ENCODE measurements at regions of chr1 and their contacts with region 1.

Region 1: DNA sequence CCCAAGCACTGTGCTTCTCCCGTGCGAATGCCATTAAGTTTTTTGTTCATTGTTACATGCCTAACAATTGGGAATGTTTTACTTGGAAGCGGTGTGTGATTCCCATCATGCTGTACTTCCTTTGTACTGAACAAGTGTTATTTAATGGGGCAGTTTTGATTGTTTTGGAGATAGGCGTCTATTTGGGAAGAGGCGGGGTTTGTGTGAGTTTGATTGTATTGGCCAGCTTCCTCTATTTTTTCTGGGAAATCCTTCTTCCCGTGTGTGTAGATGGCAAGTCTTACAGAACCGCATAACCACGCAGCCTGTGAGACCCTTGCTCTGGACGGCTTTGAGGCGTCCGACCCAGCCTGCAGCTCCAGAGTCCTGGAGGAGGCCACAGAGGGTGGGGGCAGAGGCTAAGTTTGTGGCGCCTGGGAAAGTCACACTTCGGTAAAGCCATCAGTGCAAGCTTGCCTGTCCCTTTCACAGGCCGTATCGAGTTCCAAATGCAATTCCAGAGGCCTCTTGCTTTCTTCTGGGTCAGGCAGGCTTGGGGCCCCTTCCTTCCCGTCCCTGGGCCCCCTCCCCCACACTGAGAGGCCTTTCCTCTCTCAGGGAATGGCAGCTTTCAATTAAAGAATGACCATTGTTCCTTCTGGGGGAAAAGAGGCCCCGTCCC is 210.3 kb downstream of the TOMM20 start:
- DNase-seq: peak; percentile 73
- H3K4me3 ChIP-seq: no peak overlapping the region
- H3K27ac ChIP-seq: peak overlapping the region; percentile 54 to 68
- H3K4me1 ChIP-seq: peaks cover 21% of the 10 kb centered on the region
- H3K27me3 ChIP-seq: no peaks in the 10 kb centered on the region
- CTCF ChIP-seq: no peak
- POLR2A ChIP-seq: no peak

Region 2: GRCh38 chr1:234533975-234534876 is 384.1 kb before region 1 on chr1:
- intact Hi-C with region 1: loop called (anchors 5 kb)
- DNase-seq: peak; percentile 94
- H3K4me3 ChIP-seq: no peak overlapping the region
- H3K27ac ChIP-seq: peak overlapping the region; percentile 99 to 100
- H3K4me1 ChIP-seq: peaks cover 54% of the 10 kb centered on the region
- H3K27me3 ChIP-seq: no peaks in the 10 kb centered on the region
- CTCF ChIP-seq: no peak
- POLR2A ChIP-seq: no peak

Region 3: DNA sequence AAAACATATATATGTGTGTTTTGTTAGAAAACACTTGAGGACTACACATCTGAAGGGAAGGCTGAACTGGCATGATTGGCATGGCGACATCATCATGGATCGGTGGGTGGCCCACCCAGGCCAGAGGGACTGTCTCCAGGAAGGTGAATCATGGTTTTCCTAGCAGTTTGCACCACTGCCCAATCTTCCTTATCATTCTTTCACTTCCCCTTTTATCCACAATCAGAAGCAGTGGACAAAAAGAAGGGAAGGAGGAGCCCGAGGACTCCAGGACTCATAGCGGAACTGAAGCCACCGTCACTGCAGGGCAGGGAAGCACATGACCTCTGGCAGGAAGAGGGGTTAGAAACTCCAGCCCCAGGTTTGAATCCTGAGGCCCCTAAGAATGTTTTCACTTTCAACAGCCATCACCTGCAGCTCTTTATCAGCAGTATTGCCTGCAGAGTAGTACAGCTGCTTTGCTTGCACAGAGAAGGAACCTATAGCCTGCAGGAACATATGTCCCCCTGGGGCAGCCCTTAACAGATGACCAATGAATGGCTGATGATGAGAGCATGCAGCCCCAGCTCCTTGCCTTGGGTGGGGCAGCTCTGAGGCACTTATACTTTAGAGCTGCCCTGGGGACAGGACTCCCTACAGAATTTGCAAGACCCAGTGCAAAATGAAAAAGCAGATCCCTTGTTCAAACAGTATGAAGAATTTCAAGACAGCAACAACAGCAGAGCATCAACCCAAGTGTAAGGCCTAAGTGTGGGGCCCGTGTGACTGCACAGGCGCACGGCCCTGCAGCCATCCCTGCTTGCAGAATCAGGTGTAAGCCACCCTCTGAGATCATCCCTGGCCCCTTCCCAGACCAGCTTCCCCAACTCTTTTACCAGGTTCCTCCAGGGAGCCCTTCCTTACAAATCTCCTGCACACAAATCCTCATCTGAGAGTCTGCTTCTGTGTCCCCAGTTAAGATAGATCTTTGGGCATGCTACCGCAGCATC is 66.6 kb before region 1 on chr1:
- intact Hi-C with region 1: no loop called
- DNase-seq: no peak
- H3K4me3 ChIP-seq: no peak overlapping the region
- H3K27ac ChIP-seq: no peak overlapping the region
- H3K4me1 ChIP-seq: no peaks in the 10 kb centered on the region
- H3K27me3 ChIP-seq: no peaks in the 10 kb centered on the region
- CTCF ChIP-seq: no peak
- POLR2A ChIP-seq: no peak

Region 4: DNA sequence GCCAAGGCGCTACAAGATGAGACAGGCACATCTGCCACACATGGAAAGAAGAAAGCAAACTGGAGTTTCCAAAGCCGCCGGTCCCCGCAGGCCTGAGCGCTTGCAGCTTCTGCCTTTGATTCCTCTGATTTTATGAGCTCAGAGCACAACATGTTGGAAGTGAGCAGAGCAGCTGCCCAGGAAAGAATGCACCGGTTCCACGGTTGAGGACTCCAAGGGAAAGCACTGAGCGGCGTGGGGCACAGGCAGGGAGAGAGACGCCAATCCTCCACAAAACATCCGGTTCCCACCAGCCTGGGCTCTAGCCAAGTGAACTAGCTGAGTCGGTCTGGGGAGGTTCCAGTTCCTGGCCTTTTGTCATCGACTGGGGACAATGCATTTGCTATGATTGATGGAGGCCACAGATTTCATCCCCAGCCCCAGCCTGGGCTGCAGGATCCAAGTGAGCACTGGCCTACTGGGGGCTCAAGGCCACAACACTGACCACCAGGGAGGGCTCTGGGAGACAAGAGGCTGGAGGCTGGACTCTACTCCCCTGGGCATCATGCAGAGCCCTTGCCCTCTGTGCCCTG is 55.3 kb before region 1 on chr1:
- intact Hi-C with region 1: loop called (anchors 1 kb)
- DNase-seq: peak; percentile 86
- H3K4me3 ChIP-seq: no peak overlapping the region
- H3K27ac ChIP-seq: peak overlapping the region; percentile 64 to 73
- H3K4me1 ChIP-seq: peaks cover 9% of the 10 kb centered on the region
- H3K27me3 ChIP-seq: no peaks in the 10 kb centered on the region
- CTCF ChIP-seq: no peak
- POLR2A ChIP-seq: no peak

Region 5: GRCh38 chr1:234887016-234887900 is 31.1 kb before region 1 on chr1:
- intact Hi-C with region 1: loop called (anchors 2 kb)
- DNase-seq: no peak
- H3K4me3 ChIP-seq: no peak overlapping the region
- H3K27ac ChIP-seq: peak overlapping the region; percentile 72
- H3K4me1 ChIP-seq: no peaks in the 10 kb centered on the region
- H3K27me3 ChIP-seq: no peaks in the 10 kb centered on the region
- CTCF ChIP-seq: no peak
- POLR2A ChIP-seq: no peak

Region 6: GRCh38 chr1:234933475-234933874 is 15.2 kb after region 1 on chr1:
- intact Hi-C with region 1: no loop called
- DNase-seq: no peak
- H3K4me3 ChIP-seq: no peak overlapping the region
- H3K27ac ChIP-seq: no peak overlapping the region
- H3K4me1 ChIP-seq: no peaks in the 10 kb centered on the region
- H3K27me3 ChIP-seq: no peaks in the 10 kb centered on the region
- CTCF ChIP-seq: no peak
- POLR2A ChIP-seq: no peak

Region 7: GRCh38 chr1:234997201-234997895 is 79.0 kb after region 1 on chr1:
- intact Hi-C with region 1: loop called (anchors 2 kb)
- DNase-seq: peak; percentile 98
- H3K4me3 ChIP-seq: no peak overlapping the region
- H3K27ac ChIP-seq: peak overlapping the region; percentile 86 to 89
- H3K4me1 ChIP-seq: peaks cover 12% of the 10 kb centered on the region
- H3K27me3 ChIP-seq: no peaks in the 10 kb centered on the region
- CTCF ChIP-seq: peak in 1 of 4 experiments; percentile 17
- POLR2A ChIP-seq: peak; percentile 38

Region 8: GRCh38 chr1:235050911-235051360 is 132.6 kb after region 1 on chr1:
- intact Hi-C with region 1: no loop called
- DNase-seq: no peak
- H3K4me3 ChIP-seq: no peak overlapping the region
- H3K27ac ChIP-seq: no peak overlapping the region
- H3K4me1 ChIP-seq: no peaks in the 10 kb centered on the region
- H3K27me3 ChIP-seq: no peaks in the 10 kb centered on the region
- CTCF ChIP-seq: no peak
- POLR2A ChIP-seq: no peak

Region 9: GRCh38 chr1:235075188-235075926 is 157.0 kb after region 1 on chr1:
- intact Hi-C with region 1: loop called (anchors 5 kb)
- DNase-seq: peak; percentile 42
- H3K4me3 ChIP-seq: no peak overlapping the region
- H3K27ac ChIP-seq: peak overlapping the region; percentile 85 to 90
- H3K4me1 ChIP-seq: peaks cover 25% of the 10 kb centered on the region
- H3K27me3 ChIP-seq: no peaks in the 10 kb centered on the region
- CTCF ChIP-seq: no peak
- POLR2A ChIP-seq: no peak